Pancreas (tissue), 10 donors: ENCODE measurements at regions of chr4 and their contacts with region 1.

Region 1: GRCh38 chr4:155353923-155354540 is 22.7 kb downstream of the MAP9 start:
- DNase-seq: peak; percentile 34 to 82 (median 61)
- ATAC-seq: peak; percentile 85 to 96 (median 90)
- H3K4me3 ChIP-seq: no peak overlapping the region
- H3K27ac ChIP-seq: no peak overlapping the region
- H3K4me1 ChIP-seq: no peaks in the 10 kb centered on the region
- H3K27me3 ChIP-seq: no peaks in the 10 kb centered on the region
- CTCF ChIP-seq: peak; percentile 29 to 61 (median 56)

Region 2: DNA sequence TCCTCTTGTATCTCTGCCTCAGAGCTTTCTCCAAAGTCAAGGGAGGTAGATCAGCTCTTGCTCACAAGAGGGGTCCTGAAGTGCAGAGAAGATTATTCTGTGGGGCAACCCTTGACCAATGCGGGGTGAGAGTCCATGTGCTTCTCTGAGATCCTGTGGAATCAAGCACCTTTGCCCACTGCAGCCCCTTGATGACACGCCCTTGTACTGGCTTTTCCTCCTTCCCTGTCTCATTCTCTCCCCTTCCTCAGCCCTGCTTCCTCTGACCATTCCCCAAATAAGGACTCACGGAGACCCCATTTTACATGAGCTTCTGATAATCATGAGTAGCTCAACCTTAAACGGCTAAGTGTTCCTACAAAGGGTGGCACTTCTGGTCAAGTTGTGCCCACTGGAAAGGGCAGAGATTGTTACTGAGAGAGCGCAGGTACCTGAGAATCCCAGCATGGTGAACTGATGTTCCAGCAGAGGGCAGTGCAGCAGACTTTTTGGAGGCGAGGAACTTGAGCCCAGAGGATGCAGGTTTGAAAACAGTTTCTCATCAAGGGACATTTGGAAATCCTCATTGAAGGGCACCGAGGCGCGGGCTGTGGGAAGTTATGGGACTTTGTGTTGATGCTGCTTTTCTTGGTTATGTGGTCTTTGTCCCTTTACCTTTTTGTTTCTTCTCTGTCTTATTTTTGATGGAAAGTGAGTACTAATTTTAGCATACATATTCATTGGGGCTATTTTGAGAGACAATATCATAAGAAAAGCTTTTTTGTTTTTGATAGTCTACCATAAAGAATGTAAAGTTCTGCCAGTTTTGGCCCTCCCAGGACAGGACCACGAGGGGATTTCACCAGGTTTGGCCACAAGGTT is 371.6 kb before region 1 on chr4:
- intact Hi-C with region 1: loop called in 1 of 3 experiments (anchors 10 kb)
- DNase-seq: peak in 5 of 6 donors; percentile 34 to 69 (median 41)
- ATAC-seq: peak; percentile 63 to 90 (median 88)
- H3K4me3 ChIP-seq: no peak overlapping the region
- H3K27ac ChIP-seq: no peak overlapping the region
- H3K4me1 ChIP-seq: no peaks in the 10 kb centered on the region
- H3K27me3 ChIP-seq: peaks cover 0 to 4% (median 0%) of the 10 kb centered on the region in 4 donors
- CTCF ChIP-seq: peak in 3 of 4 donors; percentile 40 to 66 (median 61)

Region 3: DNA sequence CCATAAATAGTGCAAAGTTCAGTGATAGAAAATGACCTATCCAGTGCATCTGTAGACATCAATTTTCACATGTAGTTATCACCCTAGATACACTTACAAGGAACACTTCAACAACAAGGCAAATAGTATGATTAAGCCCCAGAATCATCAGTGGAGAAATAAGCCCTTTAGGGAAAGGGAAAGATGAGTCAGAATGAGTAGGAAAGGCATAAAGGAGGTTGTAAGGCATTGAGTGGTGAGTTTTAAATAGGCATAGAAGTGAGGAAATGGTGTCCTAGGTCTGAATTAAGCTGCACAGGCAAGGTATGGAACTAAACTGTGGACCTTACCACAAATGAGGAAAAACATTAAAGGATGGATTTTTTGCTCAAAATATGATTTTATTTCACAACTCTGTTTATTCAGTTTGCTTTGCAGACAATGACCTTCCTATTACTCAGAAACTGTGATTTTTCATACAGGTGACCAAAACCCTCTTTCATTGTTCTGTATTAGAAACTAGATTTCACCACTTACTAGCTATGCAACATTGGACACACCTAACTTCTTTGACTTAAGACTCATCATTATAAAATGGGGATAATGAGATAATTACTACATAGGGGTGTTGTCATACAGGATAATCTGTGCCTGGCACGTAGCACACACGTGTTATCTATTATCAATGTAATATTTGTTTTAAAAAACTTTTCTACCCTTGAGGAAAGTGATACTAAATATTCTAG is 79.8 kb after region 1 on chr4:
- intact Hi-C with region 1: no loop called
- DNase-seq: no peak
- ATAC-seq: no peak
- H3K4me3 ChIP-seq: no peak overlapping the region
- H3K27ac ChIP-seq: no peak overlapping the region
- H3K4me1 ChIP-seq: no peaks in the 10 kb centered on the region
- H3K27me3 ChIP-seq: no peaks in the 10 kb centered on the region
- CTCF ChIP-seq: no peak

Region 4: GRCh38 chr4:155473420-155474095 is 119.5 kb after region 1 on chr4:
- intact Hi-C with region 1: no loop called
- DNase-seq: no peak
- ATAC-seq: no peak
- H3K4me3 ChIP-seq: no peak overlapping the region
- H3K27ac ChIP-seq: no peak overlapping the region
- H3K4me1 ChIP-seq: no peaks in the 10 kb centered on the region
- H3K27me3 ChIP-seq: no peaks in the 10 kb centered on the region
- CTCF ChIP-seq: no peak